PC-3 (cell line): ENCODE measurements at regions of chrX and their contacts with region 1.

Region 1: DNA sequence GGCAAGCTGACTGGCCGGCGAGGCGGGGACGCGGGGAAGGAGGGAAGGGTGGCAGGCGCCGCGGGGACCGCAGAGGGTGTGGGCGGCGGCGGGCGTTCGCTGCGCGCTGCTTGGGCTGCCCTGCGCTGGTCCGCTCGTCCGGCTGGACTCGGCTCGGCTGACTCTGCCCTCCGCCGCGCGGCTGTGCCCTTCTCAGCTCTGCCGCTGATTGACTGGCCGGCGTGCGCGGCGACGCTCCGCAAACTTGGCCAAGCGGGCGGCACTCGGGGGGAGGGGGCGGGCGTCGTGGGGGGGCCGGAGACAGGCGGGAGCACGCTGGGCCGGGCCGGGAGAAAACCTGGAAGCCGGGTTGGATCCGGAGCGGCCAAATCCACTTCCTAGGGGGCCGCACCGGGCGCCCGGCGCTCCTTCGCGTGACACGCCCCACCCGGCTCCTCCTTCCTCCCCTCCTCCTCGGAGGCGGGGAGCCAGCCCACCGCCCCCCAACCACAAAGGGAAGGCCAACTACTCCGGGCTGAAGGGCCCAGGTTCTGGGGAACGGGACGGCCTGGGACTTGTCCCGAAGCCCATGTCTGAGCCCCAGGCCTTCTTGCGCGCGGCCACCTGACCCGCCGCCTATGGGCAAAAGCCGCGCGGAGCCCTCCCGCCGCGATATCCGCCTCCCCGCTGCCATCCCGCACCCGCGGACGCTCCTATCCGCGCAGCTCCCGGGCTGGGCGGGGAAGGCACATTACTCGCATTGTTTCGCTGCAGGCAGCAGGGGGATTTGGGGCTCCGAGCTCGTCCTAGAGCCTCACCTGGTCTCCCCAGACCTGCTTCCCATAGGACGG is at the start of gene GPC4:
- DNase-seq: peak; percentile 76
- ATAC-seq: peak; percentile 80
- H3K4me3 ChIP-seq: peak within 1 kb of the TSS; percentile 97
- H3K27ac ChIP-seq: no peak within 1 kb of the TSS
- H3K4me1 ChIP-seq: 0 out of 2 replicates have a peak, but pooled peaks cover 3% of the 10 kb centered on the region
- H3K27me3 ChIP-seq: no peaks in the 10 kb centered on the region
- CTCF ChIP-seq: no peak
- total RNA-seq, gene GPC4: 4.0 and 6.4 TPM in 2 replicates

Region 2: DNA sequence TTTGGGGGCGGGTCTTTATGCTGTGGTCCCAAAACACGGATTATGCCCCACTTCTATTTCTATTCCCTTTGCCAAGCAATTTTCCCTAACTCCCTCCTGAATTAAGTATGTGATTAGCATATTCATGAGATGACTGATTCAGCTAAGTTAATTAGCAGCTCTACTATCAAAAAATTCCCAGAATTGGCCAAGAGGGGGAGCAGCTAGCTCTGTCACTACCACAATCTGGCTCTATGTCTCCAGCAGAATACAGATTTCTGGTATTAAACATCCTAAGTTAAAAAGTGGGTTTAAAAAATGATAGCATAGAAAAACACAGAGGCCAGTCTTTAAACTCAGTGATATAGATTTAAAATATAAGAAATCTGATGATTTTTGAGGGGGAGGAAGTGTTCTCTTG is 80.5 kb before region 1 on chrX:
- CTCF ChIA-PET with region 1: no interaction called
- POLR2A ChIA-PET with region 1: no interaction called
- intact Hi-C with region 1: loop called (anchors 5 kb)
- DNase-seq: peak; percentile 50
- ATAC-seq: peak; percentile 51
- H3K4me3 ChIP-seq: no peak overlapping the region
- H3K27ac ChIP-seq: no peak overlapping the region
- H3K4me1 ChIP-seq: no peaks in the 10 kb centered on the region
- H3K27me3 ChIP-seq: no peaks in the 10 kb centered on the region
- CTCF ChIP-seq: peak; percentile 71

Region 3: DNA sequence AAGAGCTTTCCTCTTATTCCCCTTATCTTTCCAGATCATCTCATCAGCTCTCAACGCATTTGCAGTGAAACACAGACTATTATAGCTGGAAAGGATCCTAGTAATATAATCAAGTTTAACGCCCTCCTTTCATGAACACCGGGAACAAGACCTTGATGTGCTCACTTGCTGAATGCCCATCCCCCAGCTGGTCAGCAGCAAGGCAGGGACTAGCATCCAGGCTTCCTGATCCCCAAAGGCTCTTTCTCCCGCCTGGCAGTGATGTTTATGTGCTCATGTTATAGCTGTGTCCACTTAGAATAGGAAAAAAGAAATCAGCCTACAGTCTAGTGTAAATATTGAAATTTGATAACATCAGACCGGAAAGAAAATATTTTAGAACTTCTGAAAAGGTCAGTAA is 24.8 kb before region 1 on chrX:
- CTCF ChIA-PET with region 1: no interaction called
- POLR2A ChIA-PET with region 1: no interaction called
- intact Hi-C with region 1: no loop called
- DNase-seq: no peak
- ATAC-seq: peak; percentile 35; the same call in 1 of the 2 replicates
- H3K4me3 ChIP-seq: no peak overlapping the region
- H3K27ac ChIP-seq: no peak overlapping the region
- H3K4me1 ChIP-seq: no peaks in the 10 kb centered on the region
- H3K27me3 ChIP-seq: no peaks in the 10 kb centered on the region
- CTCF ChIP-seq: no peak

Region 4: GRCh38 chrX:133444951-133445831 is 29.7 kb after region 1 on chrX:
- CTCF ChIA-PET with region 1: no interaction called
- POLR2A ChIA-PET with region 1: no interaction called
- intact Hi-C with region 1: loop called (anchors 1 kb)
- DNase-seq: peak; percentile 61
- ATAC-seq: peak; percentile 76
- H3K4me3 ChIP-seq: peak overlapping the region; percentile 68
- H3K27ac ChIP-seq: no peak overlapping the region
- H3K4me1 ChIP-seq: peaks cover 10% of the 10 kb centered on the region; the same call in 1 of the 2 replicates
- H3K27me3 ChIP-seq: no peaks in the 10 kb centered on the region
- CTCF ChIP-seq: no peak